ENCODE measurements at regions of chr5 and their contacts with region 1.

Region 1: GRCh38 chr5:157858527-157859226 is at the start of gene CLINT1:
- DNase-seq: peak; percentile 83
- ATAC-seq: peak; percentile 96
- H3K4me3 ChIP-seq: peak within 1 kb of the TSS; percentile 98
- H3K27ac ChIP-seq: peak within 1 kb of the TSS; percentile 98
- H3K4me1 ChIP-seq: no peaks in the 10 kb centered on the region
- H3K27me3 ChIP-seq: no peaks in the 10 kb centered on the region
- CTCF ChIP-seq: no peak
- POLR2A ChIP-seq: peak; percentile 82
- RAD21 ChIP-seq: no peak
- total RNA-seq, gene CLINT1: 124 and 146 TPM in 2 replicates

Region 2: GRCh38 chr5:157836121-157836753 is 22.4 kb before region 1 on chr5:
- CTCF ChIA-PET with region 1: interaction called, 7 read pairs
- POLR2A ChIA-PET with region 1: no interaction called
- dilution Hi-C with region 1: no loop called
- in situ Hi-C with region 1: no loop called
- intact Hi-C with region 1: loop called (anchors 2 kb)
- DNase-seq: no peak
- ATAC-seq: no peak
- H3K4me3 ChIP-seq: no peak overlapping the region
- H3K27ac ChIP-seq: no peak overlapping the region
- H3K4me1 ChIP-seq: no peaks in the 10 kb centered on the region
- H3K27me3 ChIP-seq: no peaks in the 10 kb centered on the region
- CTCF ChIP-seq: no peak
- POLR2A ChIP-seq: no peak
- RAD21 ChIP-seq: no peak

Region 3: DNA sequence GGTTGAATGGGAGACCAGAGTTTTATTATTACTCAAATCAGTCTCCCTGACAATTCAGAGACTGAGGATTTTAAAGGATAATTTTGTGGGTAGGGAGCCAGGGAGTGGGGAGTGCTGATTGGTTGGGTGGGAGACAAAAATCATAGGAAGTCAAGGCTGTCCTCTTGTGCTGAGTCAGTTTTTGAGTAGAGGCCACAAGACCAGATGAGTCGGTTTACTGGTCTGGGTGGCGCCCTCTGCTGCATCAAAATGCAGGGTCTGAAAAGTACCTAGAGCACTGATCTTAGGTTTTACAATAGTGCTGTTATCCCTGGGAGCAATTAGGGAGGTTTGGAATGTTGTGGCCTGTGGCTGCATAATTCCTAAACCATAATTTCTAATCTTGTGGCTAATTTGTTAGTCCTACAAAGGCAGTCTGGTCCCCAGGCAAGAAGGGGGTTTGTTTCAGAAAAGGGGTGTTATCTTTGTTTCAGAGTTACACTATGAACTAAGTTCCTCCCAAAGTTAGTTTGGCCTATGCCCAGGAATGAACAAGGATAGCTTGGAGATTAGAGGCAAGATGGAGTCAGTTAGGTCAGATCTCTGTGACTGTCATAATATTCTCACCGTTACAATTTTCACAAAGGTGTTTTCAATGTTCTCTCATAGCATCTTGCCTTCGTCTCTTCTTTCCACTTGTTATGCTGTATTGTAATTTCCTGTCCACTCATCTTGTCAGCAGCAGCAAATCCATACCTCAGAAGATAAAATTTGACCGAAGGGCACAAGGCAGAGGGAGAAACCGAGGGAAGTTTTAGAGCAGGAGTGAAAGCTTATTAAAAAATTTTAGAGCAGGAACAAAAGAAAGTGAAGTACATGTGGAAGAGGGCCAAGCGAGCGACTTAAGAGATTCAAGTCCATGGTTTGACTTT is 59.5 kb after region 1 on chr5:
- CTCF ChIA-PET with region 1: interaction called, 4 read pairs
- POLR2A ChIA-PET with region 1: no interaction called
- dilution Hi-C with region 1: no loop called
- in situ Hi-C with region 1: no loop called
- intact Hi-C with region 1: loop called (anchors 1 kb)
- DNase-seq: peak; percentile 75
- ATAC-seq: peak; percentile 86
- H3K4me3 ChIP-seq: no peak overlapping the region
- H3K27ac ChIP-seq: no peak overlapping the region
- H3K4me1 ChIP-seq: no peaks in the 10 kb centered on the region
- H3K27me3 ChIP-seq: peaks cover 8% of the 10 kb centered on the region
- CTCF ChIP-seq: peak; percentile 61
- POLR2A ChIP-seq: no peak
- RAD21 ChIP-seq: peak; percentile 60

Region 4: GRCh38 chr5:157948738-157949410 is 90.2 kb after region 1 on chr5:
- CTCF ChIA-PET with region 1: interaction called, 5 read pairs
- POLR2A ChIA-PET with region 1: no interaction called
- dilution Hi-C with region 1: no loop called
- in situ Hi-C with region 1: no loop called
- intact Hi-C with region 1: loop called (anchors 2 kb)
- DNase-seq: peak; percentile 90
- ATAC-seq: peak; percentile 100
- H3K4me3 ChIP-seq: no peak overlapping the region
- H3K27ac ChIP-seq: no peak overlapping the region
- H3K4me1 ChIP-seq: no peaks in the 10 kb centered on the region
- H3K27me3 ChIP-seq: no peaks in the 10 kb centered on the region
- CTCF ChIP-seq: peak; percentile 93
- POLR2A ChIP-seq: no peak
- RAD21 ChIP-seq: peak; percentile 63

Region 5: GRCh38 chr5:157994906-157995519 is 136.3 kb after region 1 on chr5:
- CTCF ChIA-PET with region 1: interaction called, 5 read pairs
- POLR2A ChIA-PET with region 1: no interaction called
- dilution Hi-C with region 1: no loop called
- in situ Hi-C with region 1: no loop called
- intact Hi-C with region 1: loop called (anchors 1 kb)
- DNase-seq: peak; percentile 54
- ATAC-seq: peak; percentile 100
- H3K4me3 ChIP-seq: no peak overlapping the region
- H3K27ac ChIP-seq: no peak overlapping the region
- H3K4me1 ChIP-seq: no peaks in the 10 kb centered on the region
- H3K27me3 ChIP-seq: no peaks in the 10 kb centered on the region
- CTCF ChIP-seq: peak; percentile 69
- POLR2A ChIP-seq: no peak
- RAD21 ChIP-seq: peak; percentile 73

Region 6: DNA sequence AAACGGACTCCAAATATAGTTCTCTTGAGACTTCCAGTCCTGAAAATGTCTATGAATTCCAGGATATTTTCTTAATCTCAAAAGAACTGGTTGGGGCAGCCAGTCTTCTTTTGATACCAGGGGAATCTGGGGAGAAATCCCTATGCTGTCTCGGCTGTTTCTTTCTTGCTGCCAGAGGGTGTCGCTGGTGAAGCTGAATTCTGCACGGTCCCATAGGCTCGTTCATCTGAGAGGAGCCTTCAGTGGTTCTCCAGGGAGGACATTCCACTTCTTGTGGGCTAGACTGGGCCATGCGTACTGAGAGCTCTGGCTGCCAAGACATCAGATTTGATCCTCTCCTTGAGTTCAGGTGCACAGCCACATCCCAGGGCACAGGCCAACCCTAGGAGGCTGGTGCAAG is 155.3 kb after region 1 on chr5:
- CTCF ChIA-PET with region 1: no interaction called
- POLR2A ChIA-PET with region 1: no interaction called
- dilution Hi-C with region 1: no loop called
- in situ Hi-C with region 1: no loop called
- intact Hi-C with region 1: no loop called
- DNase-seq: peak; percentile 12
- ATAC-seq: peak; percentile 72
- H3K4me3 ChIP-seq: no peak overlapping the region
- H3K27ac ChIP-seq: no peak overlapping the region
- H3K4me1 ChIP-seq: no peaks in the 10 kb centered on the region
- H3K27me3 ChIP-seq: no peaks in the 10 kb centered on the region
- CTCF ChIP-seq: peak; percentile 18; the same call in 1 of the 2 replicates
- POLR2A ChIP-seq: no peak
- RAD21 ChIP-seq: no peak

Region 7: DNA sequence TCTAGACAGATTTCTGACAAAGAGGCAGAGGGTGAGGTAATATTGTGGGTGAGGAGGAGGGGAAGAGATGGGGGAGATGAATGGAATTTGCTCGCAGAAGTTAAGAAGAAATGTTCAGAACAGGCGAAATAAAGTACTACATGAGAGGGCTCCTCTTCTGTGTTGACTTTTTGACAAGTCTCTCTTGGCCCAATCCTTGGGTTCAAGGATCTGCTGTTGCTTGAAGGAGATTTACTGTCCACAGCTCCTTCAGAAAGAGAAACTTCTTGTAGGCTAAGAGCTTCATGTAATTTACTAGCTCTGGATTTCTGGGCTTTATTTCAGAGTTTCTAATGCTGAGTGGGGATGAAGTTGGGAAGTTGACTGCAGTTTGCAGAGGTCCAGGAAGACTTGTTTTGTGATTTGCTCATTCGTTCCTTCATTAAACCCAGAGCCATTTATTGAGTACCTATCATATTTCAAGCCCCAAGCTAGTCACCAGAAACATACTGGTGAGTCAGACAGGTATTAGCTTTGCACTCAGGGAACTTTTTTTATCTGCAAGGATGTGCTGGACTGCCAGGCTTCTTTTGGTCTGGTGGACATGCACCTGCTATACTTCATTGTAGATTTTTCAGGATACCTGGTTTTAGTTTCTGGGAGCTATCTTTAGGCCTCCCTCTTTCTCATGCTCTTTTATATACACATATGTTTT is 403.1 kb after region 1 on chr5:
- CTCF ChIA-PET with region 1: no interaction called
- POLR2A ChIA-PET with region 1: no interaction called
- dilution Hi-C with region 1: no loop called
- in situ Hi-C with region 1: no loop called
- intact Hi-C with region 1: no loop called
- DNase-seq: no peak
- ATAC-seq: no peak
- H3K4me3 ChIP-seq: no peak overlapping the region
- H3K27ac ChIP-seq: no peak overlapping the region
- H3K4me1 ChIP-seq: no peaks in the 10 kb centered on the region
- H3K27me3 ChIP-seq: no peaks in the 10 kb centered on the region
- CTCF ChIP-seq: no peak
- POLR2A ChIP-seq: no peak
- RAD21 ChIP-seq: no peak